AG04449 (cell line): ENCODE measurements at regions of chr1 and their contacts with region 1.

Region 1: GRCh38 chr1:86833461-86834215 is 80.3 kb downstream of the SELENOF start:
- DNase-seq: peak; percentile 45
- H3K4me3 ChIP-seq: no peak overlapping the region
- CTCF ChIP-seq: peak; percentile 55

Region 2: GRCh38 chr1:86846166-86846647 is 12.6 kb after region 1 on chr1:
- CTCF ChIA-PET with region 1: interaction called, 18 read pairs
- POLR2A ChIA-PET with region 1: no interaction called
- DNase-seq: peak; percentile 80
- H3K4me3 ChIP-seq: no peak overlapping the region
- CTCF ChIP-seq: no peak

Region 3: DNA sequence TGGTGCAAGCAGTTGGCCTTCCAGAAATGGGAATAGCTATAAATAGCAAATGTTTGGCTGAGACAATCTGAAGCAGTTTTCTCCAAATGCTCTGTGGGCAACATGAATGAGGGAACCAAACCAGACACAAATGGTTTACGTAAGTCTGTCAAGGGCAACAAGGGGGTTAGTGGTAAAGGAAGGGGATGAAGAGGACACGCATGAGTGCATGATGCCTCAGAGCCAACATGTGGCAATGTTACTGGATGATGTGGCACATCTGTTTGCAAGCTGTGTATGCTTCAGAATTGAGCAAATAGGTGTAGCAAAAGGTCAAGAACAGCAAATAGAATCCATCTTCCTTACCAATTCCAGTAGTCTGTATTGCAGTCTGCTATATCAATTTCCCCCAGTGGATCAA is 418.8 kb after region 1 on chr1:
- CTCF ChIA-PET with region 1: no interaction called
- POLR2A ChIA-PET with region 1: no interaction called
- DNase-seq: peak; percentile 40
- H3K4me3 ChIP-seq: no peak overlapping the region
- CTCF ChIP-seq: no peak